Activated CD4-positive, alpha-beta memory T cell treated with anti-CD3 and anti-CD28 coated beads for 36 hours (primary cell): ENCODE measurements at regions of chr15 and their contacts with region 1.

Region 1: GRCh38 chr15:69160141-69160993 is at the start of gene GLCE:
- DNase-seq: peak; percentile 95
- H3K4me3 Mint-ChIP-seq: peak within 1 kb of the TSS; percentile 81
- H3K27ac Mint-ChIP-seq: peak within 1 kb of the TSS; percentile 24
- H3K4me1 Mint-ChIP-seq: peaks cover 14% of the 10 kb centered on the region
- H3K27me3 Mint-ChIP-seq: peaks cover 5% of the 10 kb centered on the region
- total RNA-seq, gene GLCE: 3.9 to 4.4 TPM

Region 2: GRCh38 chr15:69452692-69453521 is 292.5 kb after region 1 on chr15 and contains the start of gene RPLP1:
- CTCF ChIA-PET with region 1: no interaction called
- POLR2A ChIA-PET with region 1: interaction called, 21 read pairs
- intact Hi-C with region 1: loop called (anchors 2 kb)
- DNase-seq: peak; percentile 97
- H3K4me3 Mint-ChIP-seq: peak within 1 kb of the TSS; percentile 93
- H3K27ac Mint-ChIP-seq: peak within 1 kb of the TSS; percentile 95
- H3K4me1 Mint-ChIP-seq: peaks cover 23% of the 10 kb centered on the region
- H3K27me3 Mint-ChIP-seq: no peaks in the 10 kb centered on the region
- total RNA-seq, gene RPLP1: 2,547 to 2,620 TPM

Region 3: DNA sequence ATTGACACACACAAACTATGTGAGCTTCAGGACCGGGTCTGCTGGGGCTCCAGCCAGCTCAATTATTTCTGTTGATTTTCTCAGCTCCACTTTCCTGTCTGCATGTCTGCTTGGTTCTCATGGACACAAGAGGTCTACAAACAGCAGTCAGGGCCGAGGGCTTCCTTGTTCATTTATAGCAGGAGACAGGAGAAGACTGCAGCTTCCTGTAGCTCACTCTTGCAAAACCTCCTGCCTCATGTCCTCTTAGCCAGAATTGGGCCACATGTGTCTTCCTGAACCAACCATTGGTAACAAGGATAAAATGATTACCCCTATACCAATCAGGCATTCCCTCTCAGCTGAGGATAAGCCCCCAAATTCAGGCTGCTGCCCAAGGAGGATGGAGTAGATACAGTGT is 754.6 kb after region 1 on chr15:
- CTCF ChIA-PET with region 1: no interaction called
- POLR2A ChIA-PET with region 1: no interaction called
- intact Hi-C with region 1: no loop called
- DNase-seq: no peak
- H3K4me3 Mint-ChIP-seq: no peak overlapping the region
- H3K27ac Mint-ChIP-seq: no peak overlapping the region
- H3K4me1 Mint-ChIP-seq: no peaks in the 10 kb centered on the region
- H3K27me3 Mint-ChIP-seq: no peaks in the 10 kb centered on the region